CD8-positive, alpha-beta T cell (primary cell): ENCODE measurements at regions of chr5 and their contacts with region 1.

Region 1: DNA sequence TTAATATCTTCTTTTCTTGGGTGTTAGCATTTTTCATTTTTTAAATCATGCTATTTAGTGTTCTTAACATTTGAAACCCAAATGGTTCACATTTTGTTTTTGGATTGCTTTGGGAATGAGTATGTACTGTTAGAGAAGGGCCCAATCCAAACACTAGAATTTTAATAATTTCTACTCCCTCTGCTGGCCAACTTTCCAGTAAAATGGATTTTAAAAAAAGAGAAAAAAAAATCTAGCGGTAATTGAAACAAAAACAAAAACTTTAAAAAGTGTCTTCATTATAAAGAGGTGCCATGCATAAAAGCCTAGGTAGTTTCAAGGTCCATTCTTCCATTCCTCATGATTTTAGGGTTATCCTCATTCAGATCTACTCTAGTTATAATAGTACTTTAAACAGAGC is 32.1 kb upstream of the RICTOR start:
- DNase-seq: peak in 2 of 9 experiments; percentile 8 to 42
- ATAC-seq: no peak
- H3K4me3 ChIP-seq: no peak overlapping the region
- H3K4me3 Mint-ChIP-seq: no peak overlapping the region
- H3K27ac ChIP-seq: no peak overlapping the region
- H3K27ac Mint-ChIP-seq: peak overlapping the region; percentile 74
- H3K4me1 ChIP-seq: no peaks in the 10 kb centered on the region
- H3K4me1 Mint-ChIP-seq: peaks cover 13% of the 10 kb centered on the region
- H3K27me3 ChIP-seq: no peaks in the 10 kb centered on the region
- H3K27me3 Mint-ChIP-seq: no peaks in the 10 kb centered on the region
- CTCF ChIP-seq: peak; percentile 34

Region 2: DNA sequence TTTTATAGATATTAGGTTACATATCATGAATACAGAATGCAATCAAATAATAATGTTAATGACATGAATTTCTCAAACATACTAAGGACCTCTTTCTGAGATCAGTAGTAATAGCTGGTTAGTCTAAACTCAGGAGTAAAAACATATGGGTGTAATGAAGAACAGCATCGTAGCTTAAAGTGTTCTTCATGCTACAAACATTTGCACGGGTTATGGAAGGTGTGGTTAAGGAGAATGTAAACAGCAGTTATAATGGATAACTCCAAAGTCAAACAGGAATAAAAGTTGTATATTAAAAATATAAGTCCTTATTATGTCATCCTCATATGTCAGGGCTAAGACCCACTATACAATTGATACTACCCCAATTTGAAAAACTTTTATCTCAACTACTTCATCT is 144.6 kb before region 1 on chr5:
- CTCF ChIA-PET with region 1: no interaction called
- POLR2A ChIA-PET with region 1: interaction called, 6 read pairs
- intact Hi-C with region 1: loop called in 1 of 2 experiments (anchors 5 kb)
- DNase-seq: no peak
- ATAC-seq: no peak
- H3K4me3 ChIP-seq: no peak overlapping the region
- H3K4me3 Mint-ChIP-seq: no peak overlapping the region
- H3K27ac ChIP-seq: no peak overlapping the region
- H3K27ac Mint-ChIP-seq: no peak overlapping the region
- H3K4me1 ChIP-seq: no peaks in the 10 kb centered on the region
- H3K4me1 Mint-ChIP-seq: no peaks in the 10 kb centered on the region
- H3K27me3 ChIP-seq: no peaks in the 10 kb centered on the region
- H3K27me3 Mint-ChIP-seq: no peaks in the 10 kb centered on the region
- CTCF ChIP-seq: no peak

Region 3: DNA sequence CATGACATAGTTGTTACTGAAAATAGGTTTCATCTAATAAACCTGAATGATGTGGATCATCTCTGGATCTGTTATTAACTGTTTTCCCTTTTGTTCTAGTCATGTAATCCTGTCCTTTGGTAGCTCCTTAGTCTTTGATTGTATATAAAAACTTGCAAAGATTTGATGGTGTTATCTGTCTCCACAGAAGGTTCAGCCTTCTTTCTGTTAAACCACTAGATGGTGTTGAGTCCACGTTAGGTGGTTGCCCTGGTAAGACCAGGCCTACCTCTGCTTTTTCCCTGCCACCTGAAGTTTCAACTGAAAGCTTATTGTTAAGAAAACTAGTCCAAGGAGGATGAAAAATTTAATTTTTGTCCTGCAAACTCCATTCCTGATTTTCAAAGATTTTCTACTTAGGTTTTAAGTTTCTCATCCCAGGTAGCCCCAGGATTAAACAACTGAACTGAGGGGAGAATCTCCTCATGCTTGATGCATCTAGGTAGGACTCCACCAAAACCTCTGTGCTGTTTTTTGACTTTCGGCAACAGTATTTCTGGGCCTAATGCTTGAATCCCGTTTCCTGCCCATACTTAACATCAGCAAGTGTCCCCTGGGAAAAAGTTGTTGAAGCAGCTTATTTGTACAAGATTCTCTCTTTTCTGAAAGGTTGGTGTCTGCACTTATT is 100.6 kb before region 1 on chr5:
- CTCF ChIA-PET with region 1: interaction called, 7 read pairs
- POLR2A ChIA-PET with region 1: interaction called, 3 read pairs
- intact Hi-C with region 1: loop called in 1 of 2 experiments (anchors 1 kb)
- DNase-seq: peak in 4 of 9 experiments; percentile 8 to 56 (median 34)
- ATAC-seq: peak; percentile 66
- H3K4me3 ChIP-seq: no peak overlapping the region
- H3K4me3 Mint-ChIP-seq: no peak overlapping the region
- H3K27ac ChIP-seq: no peak overlapping the region
- H3K27ac Mint-ChIP-seq: peak overlapping the region; percentile 11
- H3K4me1 ChIP-seq: peaks cover 11% of the 10 kb centered on the region
- H3K4me1 Mint-ChIP-seq: peaks cover 57% of the 10 kb centered on the region
- H3K27me3 ChIP-seq: no peaks in the 10 kb centered on the region
- H3K27me3 Mint-ChIP-seq: no peaks in the 10 kb centered on the region
- CTCF ChIP-seq: no peak

Region 4: GRCh38 chr5:39117401-39117800 is 11.1 kb after region 1 on chr5:
- CTCF ChIA-PET with region 1: interaction called, 5 read pairs
- POLR2A ChIA-PET with region 1: no interaction called
- intact Hi-C with region 1: loop called in 1 of 2 experiments (anchors 1 kb)
- DNase-seq: no peak
- ATAC-seq: no peak
- H3K4me3 ChIP-seq: no peak overlapping the region
- H3K4me3 Mint-ChIP-seq: no peak overlapping the region
- H3K27ac ChIP-seq: no peak overlapping the region
- H3K27ac Mint-ChIP-seq: peak overlapping the region; percentile 90
- H3K4me1 ChIP-seq: no peaks in the 10 kb centered on the region
- H3K4me1 Mint-ChIP-seq: peaks cover 21% of the 10 kb centered on the region
- H3K27me3 ChIP-seq: no peaks in the 10 kb centered on the region
- H3K27me3 Mint-ChIP-seq: no peaks in the 10 kb centered on the region
- CTCF ChIP-seq: no peak

Region 5: DNA sequence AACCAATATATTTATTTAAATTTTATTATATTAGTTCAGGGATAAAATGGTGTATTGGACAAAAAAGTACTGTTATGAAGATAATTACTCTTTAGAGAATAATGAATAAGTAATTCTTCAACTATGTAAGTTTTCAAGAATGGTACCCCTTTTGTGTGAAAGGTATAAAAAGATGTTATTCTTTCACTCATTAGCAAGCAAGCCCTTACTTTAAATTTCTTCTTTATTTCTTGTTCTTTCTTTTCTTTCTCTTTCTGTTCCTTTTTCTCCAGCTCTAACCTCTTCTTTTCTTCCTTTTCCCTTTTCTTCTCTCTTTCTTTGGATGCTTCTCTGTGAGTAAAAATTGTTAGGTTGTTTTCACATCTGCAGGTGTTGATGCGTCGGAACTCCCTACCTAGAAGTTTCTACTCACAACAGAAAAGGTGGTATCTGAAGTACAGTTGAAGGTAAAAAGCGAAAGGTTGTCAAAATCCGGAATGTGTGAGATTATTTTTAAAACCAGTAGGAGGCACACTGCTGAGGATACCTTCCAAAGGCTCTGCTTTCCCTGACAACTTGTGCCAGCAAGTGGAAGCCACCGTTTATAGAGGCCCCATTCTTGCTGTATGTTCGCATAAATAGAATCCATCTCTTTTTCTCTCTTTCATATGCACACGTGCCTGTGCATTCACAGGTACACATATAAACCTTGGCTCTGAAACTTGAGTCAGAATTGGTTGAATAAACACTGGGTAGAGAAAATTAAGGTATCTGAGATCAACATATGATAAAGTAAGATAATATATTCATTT is 31.3 kb after region 1 on chr5:
- CTCF ChIA-PET with region 1: interaction called, 3 read pairs
- POLR2A ChIA-PET with region 1: no interaction called
- intact Hi-C with region 1: loop called in 1 of 2 experiments (anchors 5 kb)
- DNase-seq: peak in 2 of 9 experiments; percentile 15 to 39
- ATAC-seq: peak; percentile 34
- H3K4me3 ChIP-seq: no peak overlapping the region
- H3K4me3 Mint-ChIP-seq: no peak overlapping the region
- H3K27ac ChIP-seq: peak overlapping the region in 1 of 2 experiments; percentile 0
- H3K27ac Mint-ChIP-seq: peak overlapping the region; percentile 82
- H3K4me1 ChIP-seq: peaks cover 5% of the 10 kb centered on the region
- H3K4me1 Mint-ChIP-seq: peaks cover 37% of the 10 kb centered on the region
- H3K27me3 ChIP-seq: no peaks in the 10 kb centered on the region
- H3K27me3 Mint-ChIP-seq: no peaks in the 10 kb centered on the region
- CTCF ChIP-seq: no peak